Heart right ventricle (tissue), 16 donors: ENCODE measurements at regions of chr3 and their contacts with region 1.

Region 1: GRCh38 chr3:46663591-46664135 is 29.8 kb downstream of the ALS2CL start:
- DNase-seq: peak in 1 of 2 donors; percentile 34
- ATAC-seq: peak; percentile 27 to 54 (median 38)
- H3K4me3 ChIP-seq: no peak overlapping the region
- H3K27ac ChIP-seq: peak overlapping the region; percentile 70 to 91 (median 80)
- H3K4me1 ChIP-seq: peaks cover 17 to 81% (median 53%) of the 10 kb centered on the region in 9 donors
- H3K27me3 ChIP-seq: no peaks in the 10 kb centered on the region
- CTCF ChIP-seq: peak in 7 of 9 donors; percentile 31 to 61 (median 50)

Region 2: DNA sequence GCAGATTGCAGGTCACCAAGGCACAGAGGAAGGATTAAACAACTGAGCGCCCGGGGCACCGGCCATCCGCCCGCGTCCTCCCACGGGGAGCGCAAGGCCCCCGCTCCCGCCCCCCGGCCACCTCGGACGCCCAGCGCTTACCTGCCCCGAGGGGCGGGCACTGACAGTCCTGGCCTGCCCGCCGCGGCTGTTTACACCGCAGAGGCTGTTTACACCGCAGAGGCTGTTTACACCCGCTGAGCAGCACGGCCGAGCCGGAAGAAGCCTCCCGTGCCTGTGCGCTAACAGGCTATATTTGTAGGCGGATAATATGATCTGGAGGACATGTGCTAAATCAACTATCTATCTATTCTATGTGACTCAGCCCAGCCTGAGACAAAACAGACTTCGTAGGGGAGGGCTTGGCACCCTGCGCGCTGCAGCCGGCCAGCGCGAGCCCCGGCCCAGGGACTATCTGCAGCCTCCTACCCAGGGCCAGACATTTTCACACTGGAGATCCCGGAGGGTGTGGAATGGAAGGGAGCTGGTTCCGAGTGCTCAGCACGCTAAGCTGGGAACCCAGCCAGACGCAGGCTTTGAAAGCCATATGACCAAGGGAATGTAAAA is 97.5 kb before region 1 on chr3 and contains the start of gene LRRC2:
- intact Hi-C with region 1: loop called in 2 of 10 experiments (anchors 10 kb)
- DNase-seq: peak; percentile 66 to 73
- ATAC-seq: peak; percentile 68 to 86 (median 76)
- H3K4me3 ChIP-seq: peak within 1 kb of the TSS; percentile 43 to 77 (median 66)
- H3K27ac ChIP-seq: peak within 1 kb of the TSS; percentile 84 to 98 (median 92)
- H3K4me1 ChIP-seq: peaks cover 0 to 40% (median 14%) of the 10 kb centered on the region in 9 donors
- H3K27me3 ChIP-seq: peaks cover 0 to 27% (median 0%) of the 10 kb centered on the region in 7 donors
- CTCF ChIP-seq: no peak
- total RNA-seq, gene LRRC2: 103 to 163 (median 128) TPM

Region 3: DNA sequence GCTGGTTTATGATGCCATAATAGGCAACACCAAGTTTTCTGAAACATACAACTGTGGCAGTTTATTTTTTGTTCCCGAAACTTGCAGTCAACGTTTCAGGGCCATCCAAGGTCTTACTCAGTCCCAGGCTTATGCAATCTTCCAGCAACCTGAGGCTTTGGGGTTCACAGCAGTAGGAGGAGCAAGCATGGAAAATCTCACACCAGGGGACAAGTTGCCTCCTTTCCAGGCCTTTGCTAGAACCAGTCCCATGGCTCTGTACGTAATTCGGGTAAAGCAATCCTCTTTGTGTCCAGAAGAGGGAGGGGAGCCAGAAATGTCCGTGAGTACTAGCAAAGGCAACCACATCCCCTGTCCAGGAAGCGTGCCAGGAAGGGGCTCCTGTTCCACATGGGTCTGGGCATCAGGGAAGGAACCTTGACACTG is 56.0 kb before region 1 on chr3:
- intact Hi-C with region 1: no loop called
- DNase-seq: no peak
- ATAC-seq: peak in 2 of 8 donors; percentile 16 to 42
- H3K4me3 ChIP-seq: no peak overlapping the region
- H3K27ac ChIP-seq: peak overlapping the region in 1 of 10 donors; percentile 28
- H3K4me1 ChIP-seq: peaks cover 0 to 34% (median 0%) of the 10 kb centered on the region in 9 donors
- H3K27me3 ChIP-seq: no peaks in the 10 kb centered on the region
- CTCF ChIP-seq: peak in 1 of 9 donors; percentile 9

Region 4: GRCh38 chr3:46617941-46618340 is 45.7 kb before region 1 on chr3:
- intact Hi-C with region 1: no loop called
- DNase-seq: no peak
- ATAC-seq: no peak
- H3K4me3 ChIP-seq: no peak overlapping the region
- H3K27ac ChIP-seq: no peak overlapping the region
- H3K4me1 ChIP-seq: peaks cover 0 to 8% (median 0%) of the 10 kb centered on the region in 9 donors
- H3K27me3 ChIP-seq: peaks cover 0 to 6% (median 0%) of the 10 kb centered on the region in 7 donors
- CTCF ChIP-seq: no peak

Region 5: GRCh38 chr3:46695177-46695961 is 31.7 kb after region 1 on chr3:
- intact Hi-C with region 1: loop called in 2 of 10 experiments (anchors 2 to 5 kb)
- DNase-seq: peak; percentile 65 to 77
- ATAC-seq: peak; percentile 5 to 65 (median 44)
- H3K4me3 ChIP-seq: no peak overlapping the region
- H3K27ac ChIP-seq: peak overlapping the region; percentile 76 to 99 (median 92)
- H3K4me1 ChIP-seq: peaks cover 66 to 89% (median 79%) of the 10 kb centered on the region in 9 donors
- H3K27me3 ChIP-seq: peaks cover 0 to 11% (median 0%) of the 10 kb centered on the region in 7 donors
- CTCF ChIP-seq: peak in 6 of 9 donors; percentile 17 to 30 (median 24)

Region 6: DNA sequence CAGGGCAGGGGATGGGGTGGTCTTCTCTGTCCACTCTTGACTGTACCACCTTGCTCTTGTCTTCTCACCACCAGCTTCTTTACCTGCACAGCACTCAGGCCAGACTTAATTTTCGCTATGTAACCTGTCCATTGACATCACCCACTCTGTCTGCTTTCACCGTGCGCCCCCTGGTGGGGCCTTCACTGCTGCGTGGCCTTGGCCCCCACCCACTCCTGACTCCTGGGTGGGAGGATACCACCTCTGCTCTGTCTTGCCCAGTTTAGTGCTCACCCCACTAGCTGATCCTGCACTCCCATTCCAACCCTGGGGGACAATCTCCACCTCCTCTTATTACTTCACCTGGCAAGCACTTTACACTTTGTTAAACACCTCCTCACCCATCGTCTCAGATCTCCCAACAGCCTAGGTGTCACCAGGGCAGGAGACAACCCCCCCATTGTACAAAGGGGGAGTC is 231.6 kb after region 1 on chr3:
- intact Hi-C with region 1: loop called in 1 of 10 experiments (anchors 5 kb)
- DNase-seq: peak; percentile 75 to 85
- ATAC-seq: peak in 7 of 8 donors; percentile 45 to 73 (median 52)
- H3K4me3 ChIP-seq: no peak overlapping the region
- H3K27ac ChIP-seq: no peak overlapping the region
- H3K4me1 ChIP-seq: peaks cover 11 to 63% (median 41%) of the 10 kb centered on the region in 9 donors
- H3K27me3 ChIP-seq: peaks cover 0 to 56% (median 11%) of the 10 kb centered on the region in 7 donors
- CTCF ChIP-seq: peak; percentile 85 to 94 (median 89)